ENCODE measurements at regions of chr11 and their contacts with region 1.

Region 1: DNA sequence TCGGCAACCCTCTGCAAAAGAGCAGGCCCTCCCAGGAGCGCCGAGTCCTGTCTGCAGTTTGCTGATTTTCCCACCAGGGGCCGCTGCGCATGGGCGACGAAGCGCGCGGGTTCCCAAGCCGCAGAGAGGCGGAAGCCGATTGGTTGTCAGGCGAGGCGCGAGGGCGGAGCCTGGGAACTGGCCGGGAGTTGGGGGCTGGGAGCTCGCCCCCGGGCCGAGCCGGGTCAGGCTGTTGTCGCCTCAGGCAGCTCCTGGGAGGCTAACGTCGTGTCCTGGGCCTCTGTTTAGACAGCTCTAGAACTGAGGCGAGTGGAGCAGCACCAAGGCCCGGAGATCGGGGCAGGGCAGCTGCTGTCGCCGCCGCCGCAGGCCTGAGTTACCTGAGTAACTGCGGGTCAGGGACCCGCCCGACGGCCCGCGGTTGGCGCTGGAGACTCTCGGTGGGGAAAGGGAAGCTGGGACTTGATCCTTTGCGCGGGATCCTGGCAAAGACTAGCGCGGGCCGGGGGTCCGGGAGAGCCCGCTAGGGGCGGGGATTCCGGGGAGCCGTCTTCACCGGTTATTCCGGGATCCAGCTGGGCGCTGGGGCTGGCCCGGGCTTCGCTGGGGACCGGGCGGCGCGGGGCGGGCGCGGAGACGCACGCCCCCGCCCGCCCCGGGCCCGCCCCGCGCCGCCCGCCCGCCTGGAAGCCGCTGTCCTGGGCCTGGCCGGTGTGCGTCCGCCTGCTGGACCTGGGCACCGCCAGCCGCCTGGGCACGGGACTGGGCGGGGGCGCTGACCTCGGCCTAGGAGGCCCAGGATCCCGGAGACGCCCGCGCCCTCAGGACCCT is at the start of gene STIM1:
- DNase-seq: peak; percentile 98
- ATAC-seq: peak; percentile 77
- H3K4me3 Mint-ChIP-seq: peak within 1 kb of the TSS; percentile 88
- H3K27ac Mint-ChIP-seq: peak within 1 kb of the TSS; percentile 99
- H3K4me1 Mint-ChIP-seq: peaks cover 59% of the 10 kb centered on the region
- H3K27me3 Mint-ChIP-seq: no peaks in the 10 kb centered on the region
- total RNA-seq, gene STIM1: 97.3 to 104 TPM

Region 2: GRCh38 chr11:3834664-3835461 is 20.3 kb before region 1 on chr11:
- CTCF ChIA-PET with region 1: interaction called, 458 read pairs
- POLR2A ChIA-PET with region 1: interaction called, 234 read pairs
- DNase-seq: no peak
- ATAC-seq: no peak
- H3K4me3 Mint-ChIP-seq: peak overlapping the region; percentile 61
- H3K27ac Mint-ChIP-seq: peak overlapping the region; percentile 84
- H3K4me1 Mint-ChIP-seq: peaks cover 86% of the 10 kb centered on the region
- H3K27me3 Mint-ChIP-seq: no peaks in the 10 kb centered on the region

Region 3: DNA sequence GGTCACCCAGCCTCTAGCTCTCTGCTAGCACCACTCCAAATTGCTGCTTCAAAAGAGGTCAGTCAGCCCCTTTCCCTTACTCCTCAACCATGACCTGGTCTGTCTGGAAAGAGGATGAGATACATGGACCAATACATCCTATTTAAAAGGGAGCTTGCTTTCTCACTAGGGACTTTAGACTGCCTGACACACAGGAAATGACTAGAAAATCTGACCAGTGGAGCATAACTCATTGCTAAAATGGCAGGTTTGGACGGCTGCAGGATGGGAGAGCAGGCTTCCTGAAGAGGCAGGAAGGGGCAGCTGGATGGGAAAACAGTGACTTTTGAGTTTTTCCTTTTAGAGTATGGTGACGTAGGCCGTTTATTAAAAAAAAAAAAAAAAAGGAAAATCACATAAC is 25.5 kb after region 1 on chr11:
- CTCF ChIA-PET with region 1: interaction called, 27 read pairs
- POLR2A ChIA-PET with region 1: interaction called, 10 read pairs
- DNase-seq: no peak
- ATAC-seq: no peak
- H3K4me3 Mint-ChIP-seq: no peak overlapping the region
- H3K27ac Mint-ChIP-seq: peak overlapping the region; percentile 73
- H3K4me1 Mint-ChIP-seq: peaks cover 69% of the 10 kb centered on the region
- H3K27me3 Mint-ChIP-seq: no peaks in the 10 kb centered on the region

Region 4: DNA sequence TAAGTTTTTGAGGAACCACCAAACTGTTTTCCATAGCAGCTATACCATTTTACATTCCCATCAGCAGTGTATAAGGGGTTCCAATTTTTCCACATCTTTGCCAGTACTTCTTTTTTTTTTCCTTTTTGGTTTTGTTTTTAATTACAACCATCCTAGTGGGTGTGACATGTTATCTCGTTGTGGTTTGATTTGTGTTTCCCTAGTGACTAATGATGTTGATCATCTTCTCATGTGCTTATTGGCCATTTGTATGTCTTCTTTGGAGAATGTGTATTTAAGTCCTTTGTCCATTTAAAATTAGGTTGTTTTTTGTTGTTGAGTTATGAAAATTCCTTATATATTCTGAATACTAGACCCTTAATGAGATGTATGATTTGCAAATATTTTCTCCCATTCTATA is 59.6 kb after region 1 on chr11:
- CTCF ChIA-PET with region 1: interaction called, 15 read pairs
- POLR2A ChIA-PET with region 1: interaction called, 5 read pairs
- DNase-seq: no peak
- ATAC-seq: no peak
- H3K4me3 Mint-ChIP-seq: no peak overlapping the region
- H3K27ac Mint-ChIP-seq: no peak overlapping the region
- H3K4me1 Mint-ChIP-seq: peaks cover 57% of the 10 kb centered on the region
- H3K27me3 Mint-ChIP-seq: no peaks in the 10 kb centered on the region

Region 5: GRCh38 chr11:3959015-3959919 is 104.1 kb after region 1 on chr11:
- CTCF ChIA-PET with region 1: interaction called, 19 read pairs
- POLR2A ChIA-PET with region 1: interaction called, 6 read pairs
- DNase-seq: no peak
- ATAC-seq: no peak
- H3K4me3 Mint-ChIP-seq: no peak overlapping the region
- H3K27ac Mint-ChIP-seq: no peak overlapping the region
- H3K4me1 Mint-ChIP-seq: peaks cover 67% of the 10 kb centered on the region
- H3K27me3 Mint-ChIP-seq: no peaks in the 10 kb centered on the region

Region 6: DNA sequence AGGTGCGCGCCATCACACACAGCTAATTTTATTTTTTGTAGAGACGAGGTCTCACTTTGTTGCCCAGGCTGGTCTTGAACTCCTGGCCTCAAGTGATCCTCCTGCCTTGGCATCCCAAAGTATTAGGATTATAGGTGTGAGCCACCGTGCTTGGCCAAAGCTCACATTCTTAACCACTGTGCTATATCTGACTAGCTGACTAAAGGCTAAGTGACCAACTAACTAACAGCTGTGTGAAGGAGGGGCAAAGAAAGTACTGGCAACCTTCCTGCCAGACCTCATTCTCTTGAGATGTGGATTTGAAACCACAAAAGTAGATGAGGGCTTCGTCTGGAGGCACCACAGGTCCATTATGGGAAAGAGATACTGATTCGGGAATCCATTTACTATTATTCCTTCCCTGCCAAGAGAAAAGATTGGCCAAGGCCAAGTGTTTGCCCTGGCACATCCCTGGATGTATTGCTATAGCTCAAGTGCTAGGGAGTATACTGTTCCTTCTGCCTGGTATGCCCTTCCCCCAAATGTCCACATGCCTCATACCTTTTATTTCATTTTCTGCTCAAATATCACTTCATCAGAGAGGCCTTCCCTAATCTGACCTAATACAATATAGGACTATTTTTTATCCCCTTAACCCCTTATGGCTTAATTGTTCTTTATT is 186.7 kb after region 1 on chr11:
- CTCF ChIA-PET with region 1: interaction called, 10 read pairs
- POLR2A ChIA-PET with region 1: interaction called, 6 read pairs
- DNase-seq: no peak
- ATAC-seq: no peak
- H3K4me3 Mint-ChIP-seq: no peak overlapping the region
- H3K27ac Mint-ChIP-seq: no peak overlapping the region
- H3K4me1 Mint-ChIP-seq: peaks cover 16% of the 10 kb centered on the region
- H3K27me3 Mint-ChIP-seq: no peaks in the 10 kb centered on the region

Measured in activated CD8-positive, alpha-beta T cell treated with anti-CD3 and anti-CD28 coated beads, Interleukin-2, amount 10 ng/mL, durations not matched to agents 7 days and 5 days (primary cell).